ENCODE measurements at regions of chr20 and their contacts with region 1.

Region 1: DNA sequence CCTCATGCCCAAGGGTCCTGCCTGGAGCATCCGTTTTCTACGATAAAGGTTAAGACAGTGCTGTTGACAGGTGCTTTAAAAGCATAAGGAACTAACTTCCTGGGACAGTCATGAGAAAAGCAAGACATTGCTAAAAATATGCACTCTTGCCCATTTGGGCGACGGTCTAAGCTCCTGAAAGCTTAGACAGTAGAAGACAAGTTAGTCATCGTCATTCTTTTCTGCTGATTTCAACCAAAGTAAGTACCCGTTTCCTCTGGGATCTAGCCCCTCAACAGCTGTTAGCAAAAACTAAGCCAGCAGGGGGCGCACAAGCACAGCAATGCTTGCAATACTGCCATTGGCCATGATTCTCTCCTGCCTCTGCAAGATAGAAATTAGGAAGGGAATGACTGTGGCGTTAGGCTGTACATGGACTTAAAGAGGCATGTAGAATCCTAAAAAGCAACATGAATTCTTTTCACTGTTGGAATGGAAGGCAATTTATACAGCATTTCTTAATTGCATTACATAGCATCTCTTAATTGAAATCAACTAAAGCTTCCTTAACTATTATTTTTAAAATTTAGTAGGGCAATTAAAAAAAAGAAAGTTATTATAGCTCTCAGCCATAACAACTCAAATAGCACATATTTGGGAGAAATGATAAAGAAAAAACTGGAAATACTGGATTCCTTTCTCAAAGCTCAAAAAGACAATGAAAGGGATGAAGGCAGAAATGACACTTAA is 147.8 kb upstream of the RALGAPA2 start:
- DNase-seq: peak; percentile 74
- ATAC-seq: no peak
- H3K4me3 ChIP-seq: no peak overlapping the region
- H3K4me3 Mint-ChIP-seq: no peak overlapping the region
- H3K27ac ChIP-seq: no peak overlapping the region
- H3K27ac Mint-ChIP-seq: no peak overlapping the region
- H3K4me1 ChIP-seq: peaks cover 0 to 3% of the 10 kb centered on the region in 2 donors
- H3K4me1 Mint-ChIP-seq: no peaks in the 10 kb centered on the region
- H3K27me3 ChIP-seq: peaks cover 0 to 8% (median 0%) of the 10 kb centered on the region in 4 experiments
- H3K27me3 Mint-ChIP-seq: peaks cover 17% of the 10 kb centered on the region
- CTCF ChIP-seq: peak; percentile 93

Region 2: DNA sequence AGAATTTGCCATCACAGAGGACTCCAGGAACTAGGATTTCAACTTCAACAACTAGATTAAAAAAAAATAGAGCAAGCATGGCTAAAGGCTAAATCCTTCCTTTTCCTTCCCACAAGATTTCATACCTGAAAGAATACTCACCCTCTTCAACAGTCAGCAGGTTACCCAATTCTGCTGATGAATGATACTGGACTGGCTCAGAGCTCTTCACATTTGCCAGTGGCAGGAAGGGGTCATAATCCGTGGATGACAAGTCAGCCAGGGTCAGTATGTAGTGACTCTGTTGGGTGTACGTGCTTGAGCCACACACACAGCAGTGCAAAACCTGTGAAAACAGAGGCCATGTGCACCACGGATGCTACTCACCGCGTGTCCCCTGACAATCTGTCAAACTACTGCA is 339.5 kb before region 1 on chr20:
- CTCF ChIA-PET with region 1: no interaction called
- POLR2A ChIA-PET with region 1: no interaction called
- intact Hi-C with region 1: no loop called
- DNase-seq: no peak
- ATAC-seq: no peak
- H3K4me3 ChIP-seq: no peak overlapping the region
- H3K4me3 Mint-ChIP-seq: no peak overlapping the region
- H3K27ac ChIP-seq: no peak overlapping the region
- H3K27ac Mint-ChIP-seq: no peak overlapping the region
- H3K4me1 ChIP-seq: no peaks in the 10 kb centered on the region
- H3K4me1 Mint-ChIP-seq: no peaks in the 10 kb centered on the region
- H3K27me3 ChIP-seq: no peaks in the 10 kb centered on the region
- H3K27me3 Mint-ChIP-seq: no peaks in the 10 kb centered on the region
- CTCF ChIP-seq: no peak

Region 3: GRCh38 chr20:20802328-20802727 is 57.9 kb before region 1 on chr20:
- CTCF ChIA-PET with region 1: no interaction called
- POLR2A ChIA-PET with region 1: no interaction called
- intact Hi-C with region 1: no loop called
- DNase-seq: no peak
- ATAC-seq: no peak
- H3K4me3 ChIP-seq: no peak overlapping the region
- H3K4me3 Mint-ChIP-seq: no peak overlapping the region
- H3K27ac ChIP-seq: no peak overlapping the region
- H3K27ac Mint-ChIP-seq: no peak overlapping the region
- H3K4me1 ChIP-seq: no peaks in the 10 kb centered on the region
- H3K4me1 Mint-ChIP-seq: no peaks in the 10 kb centered on the region
- H3K27me3 ChIP-seq: no peaks in the 10 kb centered on the region
- H3K27me3 Mint-ChIP-seq: peaks cover 13% of the 10 kb centered on the region
- CTCF ChIP-seq: no peak

Region 4: GRCh38 chr20:20843982-20844381 is 16.3 kb before region 1 on chr20:
- CTCF ChIA-PET with region 1: interaction called, 18 read pairs
- POLR2A ChIA-PET with region 1: no interaction called
- intact Hi-C with region 1: no loop called
- DNase-seq: no peak
- ATAC-seq: no peak
- H3K4me3 ChIP-seq: no peak overlapping the region
- H3K4me3 Mint-ChIP-seq: no peak overlapping the region
- H3K27ac ChIP-seq: no peak overlapping the region
- H3K27ac Mint-ChIP-seq: no peak overlapping the region
- H3K4me1 ChIP-seq: no peaks in the 10 kb centered on the region
- H3K4me1 Mint-ChIP-seq: no peaks in the 10 kb centered on the region
- H3K27me3 ChIP-seq: no peaks in the 10 kb centered on the region
- H3K27me3 Mint-ChIP-seq: peaks cover 14% of the 10 kb centered on the region
- CTCF ChIP-seq: no peak

Region 5: GRCh38 chr20:20872428-20872827 is 12.2 kb after region 1 on chr20:
- CTCF ChIA-PET with region 1: interaction called, 21 read pairs
- POLR2A ChIA-PET with region 1: no interaction called
- intact Hi-C with region 1: no loop called
- DNase-seq: no peak
- ATAC-seq: no peak
- H3K4me3 ChIP-seq: no peak overlapping the region
- H3K4me3 Mint-ChIP-seq: no peak overlapping the region
- H3K27ac ChIP-seq: no peak overlapping the region
- H3K27ac Mint-ChIP-seq: no peak overlapping the region
- H3K4me1 ChIP-seq: no peaks in the 10 kb centered on the region
- H3K4me1 Mint-ChIP-seq: no peaks in the 10 kb centered on the region
- H3K27me3 ChIP-seq: peaks cover 0 to 8% (median 2%) of the 10 kb centered on the region in 4 experiments
- H3K27me3 Mint-ChIP-seq: peaks cover 22% of the 10 kb centered on the region
- CTCF ChIP-seq: no peak

Region 6: GRCh38 chr20:21125849-21126580 is 265.8 kb after region 1 on chr20 and contains the start of gene KIZ:
- CTCF ChIA-PET with region 1: interaction called, 3 read pairs
- POLR2A ChIA-PET with region 1: no interaction called
- intact Hi-C with region 1: loop called (anchors 2 kb)
- DNase-seq: peak; percentile 97
- ATAC-seq: peak; percentile 96
- H3K4me3 ChIP-seq: peak within 1 kb of the TSS; percentile 50 to 90 (median 76)
- H3K4me3 Mint-ChIP-seq: peak within 1 kb of the TSS; percentile 91
- H3K27ac ChIP-seq: peak within 1 kb of the TSS; percentile 63 to 79
- H3K27ac Mint-ChIP-seq: peak within 1 kb of the TSS; percentile 88
- H3K4me1 ChIP-seq: peaks cover 14 to 16% of the 10 kb centered on the region in 2 donors
- H3K4me1 Mint-ChIP-seq: peaks cover 21% of the 10 kb centered on the region
- H3K27me3 ChIP-seq: no peaks in the 10 kb centered on the region
- H3K27me3 Mint-ChIP-seq: peaks cover 4% of the 10 kb centered on the region
- CTCF ChIP-seq: peak; percentile 53
- total RNA-seq, gene KIZ: 36.3 and 40.4 TPM in 2 replicates

Region 7: DNA sequence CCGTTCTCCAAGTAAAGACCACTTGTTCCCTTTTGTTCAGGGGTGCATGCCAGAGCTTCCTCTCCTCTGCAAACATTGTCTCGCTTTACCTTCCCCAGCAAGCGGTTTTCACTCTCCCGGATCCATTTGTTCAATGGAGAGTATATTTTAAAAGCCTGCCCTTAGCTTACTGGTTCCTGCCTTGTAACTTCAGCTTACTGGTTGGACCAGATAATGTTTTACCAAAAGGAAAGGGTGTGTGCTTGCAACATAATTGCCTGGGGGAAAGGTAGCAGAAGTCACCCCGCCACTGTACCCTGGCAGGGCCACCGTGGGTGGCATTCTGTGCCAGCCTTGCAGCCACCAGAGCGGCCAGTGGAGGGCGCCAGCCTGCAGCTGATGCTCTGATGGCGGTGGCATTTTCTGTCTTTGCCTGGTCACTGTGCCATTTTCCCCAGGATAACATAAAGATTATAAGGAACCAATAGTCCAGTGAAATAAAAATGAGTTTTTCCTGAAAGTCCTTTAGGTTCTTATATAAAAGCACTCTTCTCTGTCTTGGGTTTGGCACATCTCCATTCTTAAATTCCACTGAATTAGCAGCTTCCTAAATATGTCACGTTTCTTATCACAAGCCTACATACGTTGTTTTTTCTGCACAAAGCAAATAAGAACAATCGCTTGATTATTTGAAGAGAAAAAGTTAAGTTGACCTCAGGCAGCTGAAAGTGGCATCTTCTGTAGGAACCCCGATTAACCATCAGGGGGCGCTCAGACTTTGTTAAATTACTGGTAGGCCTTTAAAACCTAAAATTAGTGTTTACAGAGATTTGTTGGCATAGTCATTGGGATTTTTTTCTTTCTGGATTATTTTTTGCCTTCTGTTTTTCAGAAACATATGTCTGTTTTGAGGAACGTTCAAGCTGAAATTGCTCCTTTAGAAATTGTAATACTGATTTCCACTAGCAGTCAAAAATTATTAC is 375.5 kb after region 1 on chr20:
- CTCF ChIA-PET with region 1: interaction called, 8 read pairs
- POLR2A ChIA-PET with region 1: no interaction called
- intact Hi-C with region 1: loop called (anchors 10 kb)
- DNase-seq: peak; percentile 62
- ATAC-seq: peak; percentile 49
- H3K4me3 ChIP-seq: no peak overlapping the region
- H3K4me3 Mint-ChIP-seq: no peak overlapping the region
- H3K27ac ChIP-seq: no peak overlapping the region
- H3K27ac Mint-ChIP-seq: no peak overlapping the region
- H3K4me1 ChIP-seq: peaks cover 0 to 4% of the 10 kb centered on the region in 2 donors
- H3K4me1 Mint-ChIP-seq: peaks cover 1% of the 10 kb centered on the region
- H3K27me3 ChIP-seq: no peaks in the 10 kb centered on the region
- H3K27me3 Mint-ChIP-seq: no peaks in the 10 kb centered on the region
- CTCF ChIP-seq: peak; percentile 95

Region 8: DNA sequence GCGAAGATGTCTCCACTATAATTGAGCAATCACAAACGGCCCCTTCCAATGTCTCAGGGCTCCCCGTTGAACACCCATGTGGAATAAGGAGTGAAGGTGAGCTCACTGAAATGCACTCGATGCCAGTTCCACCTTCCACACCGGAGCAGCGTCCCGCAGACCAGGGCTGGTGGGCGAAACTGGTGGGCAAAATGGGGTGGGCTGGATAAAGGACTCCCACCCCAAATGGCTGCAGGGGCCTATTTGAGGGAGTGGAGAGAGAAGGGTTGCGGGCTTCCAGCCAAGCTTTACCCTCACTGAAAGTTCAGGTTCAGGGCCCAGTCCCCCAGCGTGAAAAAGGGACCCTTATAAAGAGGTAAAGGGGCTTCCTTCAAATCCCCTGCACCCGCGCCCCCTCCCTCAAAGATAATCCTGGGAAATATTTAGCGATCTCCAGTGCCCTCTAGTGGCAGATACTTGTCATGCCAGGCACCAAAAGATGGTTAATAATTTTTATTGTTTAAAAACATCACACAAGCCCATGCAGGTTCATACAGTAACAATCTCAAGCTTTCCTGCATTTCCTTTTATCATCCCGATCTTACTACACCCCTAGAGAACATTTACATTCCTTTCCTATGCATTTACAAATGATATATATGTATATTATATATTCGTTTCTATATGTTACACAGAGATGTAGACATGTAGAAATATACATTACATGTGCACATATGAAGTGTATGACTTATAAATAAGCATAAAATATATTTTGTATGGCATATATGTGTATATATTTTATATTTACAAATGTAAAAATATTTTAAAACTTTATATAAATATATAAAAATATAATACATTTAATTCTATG is 711.8 kb after region 1 on chr20:
- CTCF ChIA-PET with region 1: interaction called, 29 read pairs
- POLR2A ChIA-PET with region 1: no interaction called
- intact Hi-C with region 1: no loop called
- DNase-seq: peak; percentile 23
- ATAC-seq: no peak
- H3K4me3 ChIP-seq: no peak overlapping the region
- H3K4me3 Mint-ChIP-seq: no peak overlapping the region
- H3K27ac ChIP-seq: no peak overlapping the region
- H3K27ac Mint-ChIP-seq: no peak overlapping the region
- H3K4me1 ChIP-seq: no peaks in the 10 kb centered on the region
- H3K4me1 Mint-ChIP-seq: no peaks in the 10 kb centered on the region
- H3K27me3 ChIP-seq: peaks cover 0 to 18% (median 2%) of the 10 kb centered on the region in 4 experiments
- H3K27me3 Mint-ChIP-seq: peaks cover 22% of the 10 kb centered on the region
- CTCF ChIP-seq: peak; percentile 95